AG04450 (cell line): ENCODE measurements at regions of chr9 and their contacts with region 1.

Region 1: DNA sequence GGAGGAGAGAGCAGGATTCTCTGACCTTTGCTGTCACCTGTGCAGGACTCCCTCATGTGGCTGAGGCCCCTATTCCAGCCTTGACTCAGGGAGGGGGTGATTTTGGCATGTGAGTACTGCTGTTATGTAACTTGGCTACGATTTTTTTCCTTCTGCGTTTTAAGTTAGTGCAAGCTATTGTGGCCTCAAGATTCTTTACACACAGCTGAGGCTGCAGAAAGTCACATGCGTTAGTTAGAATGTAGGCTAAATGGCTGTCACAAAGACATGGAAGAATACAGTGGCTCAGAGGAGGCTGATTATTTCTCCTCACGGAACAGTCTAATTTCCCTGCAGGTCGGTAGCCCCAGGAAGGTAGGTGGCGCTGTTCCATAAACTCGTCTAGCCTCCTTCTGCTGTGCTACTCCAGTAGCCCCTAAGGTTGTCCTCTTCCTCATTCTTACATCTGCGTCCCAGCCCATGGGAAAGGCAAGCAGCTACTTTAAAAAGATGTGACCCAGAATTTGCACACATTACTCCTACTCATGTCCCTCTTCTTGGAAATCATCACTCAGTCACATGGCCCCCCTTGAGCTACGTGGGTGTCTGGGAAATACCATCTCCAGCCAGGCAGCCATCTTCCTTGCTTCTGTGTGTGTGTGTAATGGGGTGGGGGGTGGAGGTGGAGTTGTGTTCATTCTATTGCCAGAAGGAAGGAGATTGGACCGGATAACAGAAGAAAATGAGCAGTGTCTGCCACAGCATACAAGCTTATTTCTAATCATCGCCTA is 486.6 kb downstream of the CCDC171 start:
- DNase-seq: no peak
- H3K4me3 ChIP-seq: no peak overlapping the region
- H3K27ac ChIP-seq: peak overlapping the region; percentile 93
- H3K27me3 ChIP-seq: no peaks in the 10 kb centered on the region
- CTCF ChIP-seq: peak; percentile 56

Region 2: GRCh38 chr9:15889555-15889954 is 149.8 kb before region 1 on chr9:
- CTCF ChIA-PET with region 1: no interaction called
- POLR2A ChIA-PET with region 1: no interaction called
- DNase-seq: no peak
- H3K4me3 ChIP-seq: no peak overlapping the region
- H3K27ac ChIP-seq: no peak overlapping the region
- H3K27me3 ChIP-seq: no peaks in the 10 kb centered on the region
- CTCF ChIP-seq: no peak

Region 3: GRCh38 chr9:16028548-16028947 is 10.9 kb before region 1 on chr9:
- CTCF ChIA-PET with region 1: interaction called, 13 read pairs
- POLR2A ChIA-PET with region 1: interaction called, 3 read pairs
- DNase-seq: no peak
- H3K4me3 ChIP-seq: no peak overlapping the region
- H3K27ac ChIP-seq: no peak overlapping the region
- H3K27me3 ChIP-seq: no peaks in the 10 kb centered on the region
- CTCF ChIP-seq: 0 out of 2 replicates have a peak, but pooled peaks have one; percentile 8

Region 4: GRCh38 chr9:16236311-16236710 is 196.9 kb after region 1 on chr9:
- CTCF ChIA-PET with region 1: interaction called, 4 read pairs
- POLR2A ChIA-PET with region 1: interaction called, 10 read pairs
- DNase-seq: peak; percentile 86
- H3K4me3 ChIP-seq: no peak overlapping the region
- H3K27ac ChIP-seq: peak overlapping the region; percentile 39
- H3K27me3 ChIP-seq: peaks cover 3% of the 10 kb centered on the region
- CTCF ChIP-seq: no peak